ENCODE measurements at regions of chr6 and their contacts with region 1.

Region 1: DNA sequence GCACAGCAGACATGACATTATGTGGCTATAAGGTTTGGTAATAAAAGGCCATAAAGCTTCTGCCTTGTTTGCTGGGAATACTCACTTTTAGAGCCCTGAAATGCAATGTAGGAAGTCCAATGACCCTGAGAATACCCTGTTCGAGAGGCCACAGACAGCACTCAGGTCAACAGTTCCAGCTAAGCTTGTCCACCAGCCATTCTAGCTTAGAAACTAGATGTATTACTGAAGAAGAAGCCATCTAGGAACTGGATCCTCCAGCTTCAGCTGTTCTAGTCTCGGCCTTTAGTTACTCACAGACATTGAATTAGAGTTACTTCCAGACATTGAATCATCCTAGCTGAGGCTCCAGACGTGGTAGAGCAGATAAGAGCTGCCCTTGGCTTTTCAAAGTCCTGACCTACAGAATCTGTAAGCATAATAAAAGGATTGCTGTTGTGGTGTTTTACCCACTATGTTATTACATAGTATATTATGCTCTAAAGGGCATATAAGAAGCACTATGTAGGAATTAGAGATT is 84.9 kb downstream of the MMS22L start:
- DNase-seq: no peak
- ATAC-seq: no peak
- H3K4me3 Mint-ChIP-seq: no peak overlapping the region
- H3K27ac Mint-ChIP-seq: no peak overlapping the region
- H3K4me1 Mint-ChIP-seq: no peaks in the 10 kb centered on the region
- H3K27me3 Mint-ChIP-seq: no peaks in the 10 kb centered on the region
- CTCF ChIP-seq: no peak

Region 2: GRCh38 chr6:97186416-97186999 is 11.6 kb before region 1 on chr6:
- CTCF ChIA-PET with region 1: interaction called, 19 read pairs
- POLR2A ChIA-PET with region 1: no interaction called
- intact Hi-C with region 1: no loop called
- DNase-seq: peak; percentile 15
- ATAC-seq: peak; percentile 71
- H3K4me3 Mint-ChIP-seq: no peak overlapping the region
- H3K27ac Mint-ChIP-seq: no peak overlapping the region
- H3K4me1 Mint-ChIP-seq: no peaks in the 10 kb centered on the region
- H3K27me3 Mint-ChIP-seq: no peaks in the 10 kb centered on the region
- CTCF ChIP-seq: peak; percentile 99